Activated naive CD4-positive, alpha-beta T cell treated with anti-CD3 and anti-CD28 coated beads for 36 hours (primary cell): ENCODE measurements at regions of chr3 and their contacts with region 1.

Region 1: GRCh38 chr3:101988591-101988990 is 139.3 kb downstream of the NFKBIZ start:
- DNase-seq: peak; percentile 31
- H3K4me3 Mint-ChIP-seq: no peak overlapping the region
- H3K27ac Mint-ChIP-seq: no peak overlapping the region
- H3K4me1 Mint-ChIP-seq: peaks cover 21% of the 10 kb centered on the region
- H3K27me3 Mint-ChIP-seq: no peaks in the 10 kb centered on the region

Region 2: DNA sequence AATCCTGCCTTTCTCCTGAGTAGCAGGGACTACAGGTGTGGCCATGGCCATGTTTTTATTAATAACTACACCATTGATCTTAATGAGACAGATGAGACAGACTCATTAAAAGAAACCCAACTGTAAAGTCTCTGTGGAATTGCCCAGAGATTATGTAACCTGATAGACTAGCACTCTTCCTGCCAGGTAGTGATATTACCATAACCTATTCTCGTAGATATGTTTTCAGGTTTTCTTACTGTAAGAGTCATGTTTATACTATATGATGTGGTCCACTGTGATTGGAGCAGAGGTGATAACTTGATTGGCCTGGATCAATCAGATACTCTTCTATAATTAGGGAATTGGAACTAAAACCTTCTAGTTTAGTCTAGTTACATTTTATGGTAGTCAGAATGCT is 45.6 kb before region 1 on chr3:
- CTCF ChIA-PET with region 1: no interaction called
- intact Hi-C with region 1: loop called (anchors 1 kb)
- DNase-seq: no peak
- H3K4me3 Mint-ChIP-seq: no peak overlapping the region
- H3K27ac Mint-ChIP-seq: no peak overlapping the region
- H3K4me1 Mint-ChIP-seq: peaks cover 38% of the 10 kb centered on the region
- H3K27me3 Mint-ChIP-seq: no peaks in the 10 kb centered on the region

Region 3: GRCh38 chr3:102643546-102643945 is 655.0 kb after region 1 on chr3:
- CTCF ChIA-PET with region 1: no interaction called
- intact Hi-C with region 1: no loop called
- DNase-seq: no peak
- H3K4me3 Mint-ChIP-seq: no peak overlapping the region
- H3K27ac Mint-ChIP-seq: no peak overlapping the region
- H3K4me1 Mint-ChIP-seq: no peaks in the 10 kb centered on the region
- H3K27me3 Mint-ChIP-seq: no peaks in the 10 kb centered on the region